Mammary epithelial cell (primary cell): ENCODE measurements at regions of chr9 and their contacts with region 1.

Region 1: DNA sequence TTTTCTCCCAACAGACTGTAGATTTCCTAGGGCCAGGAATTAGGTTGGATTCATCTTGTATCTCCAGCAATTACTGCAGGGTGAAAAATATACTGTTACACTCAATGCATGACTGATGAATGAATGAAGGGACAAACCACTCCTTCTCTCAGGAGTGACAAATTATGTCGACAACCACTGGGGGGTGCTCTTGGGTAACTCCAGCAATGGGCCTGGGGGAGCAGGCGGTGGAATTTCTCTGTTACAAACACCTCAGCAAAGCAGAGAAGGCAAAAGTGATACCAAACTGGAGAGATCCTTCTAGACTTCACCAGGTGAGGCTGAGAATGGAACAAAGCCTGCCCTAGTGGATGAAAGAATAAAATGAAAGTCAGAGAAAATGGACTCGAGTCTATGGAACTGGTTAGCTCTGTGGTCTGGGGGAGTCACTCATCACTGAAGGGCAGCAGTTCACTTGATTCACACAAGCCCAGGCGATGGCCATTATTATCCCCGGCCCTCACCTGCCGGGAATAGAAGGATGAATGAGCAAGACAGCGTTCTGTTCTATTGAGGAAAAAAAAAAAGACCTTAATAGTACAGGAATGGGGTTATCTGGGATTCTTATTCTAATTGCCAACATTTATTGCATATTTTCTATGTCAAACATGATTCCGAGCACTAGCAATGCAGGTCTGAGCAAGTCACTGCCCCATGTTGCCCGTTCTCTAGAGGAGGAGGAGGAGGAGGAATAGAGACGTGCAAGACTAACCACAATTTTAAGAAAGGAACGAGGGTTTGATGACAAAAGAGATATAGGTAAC is 341.1 kb downstream of the ASTN2 start:
- DNase-seq: peak; percentile 16
- H3K4me3 ChIP-seq: peak overlapping the region in 1 of 3 experiments; percentile 13
- H3K27ac ChIP-seq: no peak overlapping the region
- H3K4me1 ChIP-seq: peaks cover 8% of the 10 kb centered on the region
- H3K27me3 ChIP-seq: no peaks in the 10 kb centered on the region
- CTCF ChIP-seq: peak; percentile 69 to 80

Region 2: GRCh38 chr9:116737152-116737546 is 336.6 kb before region 1 on chr9:
- CTCF ChIA-PET with region 1: no interaction called
- dilution Hi-C with region 1: no loop called
- in situ Hi-C with region 1: no loop called
- intact Hi-C with region 1: loop called (anchors 2 kb)
- DNase-seq: peak; percentile 62
- H3K4me3 ChIP-seq: peak overlapping the region in 1 of 3 experiments; percentile 13
- H3K27ac ChIP-seq: no peak overlapping the region
- H3K4me1 ChIP-seq: no peaks in the 10 kb centered on the region
- H3K27me3 ChIP-seq: no peaks in the 10 kb centered on the region
- CTCF ChIP-seq: peak; percentile 93 to 99

Region 3: GRCh38 chr9:116959809-116960208 is 113.9 kb before region 1 on chr9:
- CTCF ChIA-PET with region 1: no interaction called
- dilution Hi-C with region 1: no loop called
- in situ Hi-C with region 1: no loop called
- intact Hi-C with region 1: no loop called
- DNase-seq: no peak
- H3K4me3 ChIP-seq: no peak overlapping the region
- H3K27ac ChIP-seq: no peak overlapping the region
- H3K4me1 ChIP-seq: no peaks in the 10 kb centered on the region
- H3K27me3 ChIP-seq: no peaks in the 10 kb centered on the region
- CTCF ChIP-seq: no peak

Region 4: DNA sequence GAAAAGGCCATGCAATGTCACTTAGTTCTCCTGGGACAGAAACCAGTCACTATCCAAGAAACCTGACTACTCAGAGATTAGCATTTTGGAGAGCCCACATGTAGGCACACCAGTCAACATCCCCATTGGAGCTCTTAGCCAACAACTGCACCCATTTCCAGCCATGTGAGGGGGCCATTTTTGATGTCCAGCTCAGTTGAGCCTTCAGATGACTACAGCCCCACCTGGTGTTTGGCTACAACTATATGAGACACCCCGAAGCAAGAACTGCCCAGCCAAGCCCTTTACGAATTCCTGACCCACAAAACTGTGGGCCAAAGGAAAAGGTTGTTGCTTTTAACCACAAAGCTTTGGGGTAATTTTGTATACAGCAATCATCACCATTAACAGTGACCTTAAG is 41.0 kb after region 1 on chr9:
- CTCF ChIA-PET with region 1: interaction called, 13 read pairs
- dilution Hi-C with region 1: no loop called
- in situ Hi-C with region 1: no loop called
- intact Hi-C with region 1: loop called (anchors 2 kb)
- DNase-seq: no peak
- H3K4me3 ChIP-seq: no peak overlapping the region
- H3K27ac ChIP-seq: no peak overlapping the region
- H3K4me1 ChIP-seq: peaks cover 2% of the 10 kb centered on the region
- H3K27me3 ChIP-seq: peaks cover 2% of the 10 kb centered on the region
- CTCF ChIP-seq: peak in 1 of 2 donors; percentile 25

Region 5: GRCh38 chr9:117247266-117247665 is 173.5 kb after region 1 on chr9:
- CTCF ChIA-PET with region 1: no interaction called
- dilution Hi-C with region 1: no loop called
- in situ Hi-C with region 1: no loop called
- intact Hi-C with region 1: loop called (anchors 10 kb)
- DNase-seq: peak; percentile 3
- H3K4me3 ChIP-seq: no peak overlapping the region
- H3K27ac ChIP-seq: no peak overlapping the region
- H3K4me1 ChIP-seq: no peaks in the 10 kb centered on the region
- H3K27me3 ChIP-seq: no peaks in the 10 kb centered on the region
- CTCF ChIP-seq: peak; percentile 22 to 44

Region 6: GRCh38 chr9:117411548-117411947 is 337.8 kb after region 1 on chr9:
- CTCF ChIA-PET with region 1: interaction called, 3 read pairs
- dilution Hi-C with region 1: no loop called
- in situ Hi-C with region 1: loop called in 1 of 2 experiments (anchors 25 kb)
- intact Hi-C with region 1: loop called (anchors 2 kb)
- DNase-seq: peak; percentile 19
- H3K4me3 ChIP-seq: no peak overlapping the region
- H3K27ac ChIP-seq: no peak overlapping the region
- H3K4me1 ChIP-seq: peaks cover 6% of the 10 kb centered on the region
- H3K27me3 ChIP-seq: peaks cover 21% of the 10 kb centered on the region
- CTCF ChIP-seq: peak; percentile 79 to 84

Region 7: GRCh38 chr9:117487555-117488175 is 413.9 kb after region 1 on chr9:
- CTCF ChIA-PET with region 1: no interaction called
- dilution Hi-C with region 1: no loop called
- in situ Hi-C with region 1: no loop called
- intact Hi-C with region 1: loop called (anchors 5 kb)
- DNase-seq: peak; percentile 65
- H3K4me3 ChIP-seq: no peak overlapping the region
- H3K27ac ChIP-seq: no peak overlapping the region
- H3K4me1 ChIP-seq: no peaks in the 10 kb centered on the region
- H3K27me3 ChIP-seq: no peaks in the 10 kb centered on the region
- CTCF ChIP-seq: peak; percentile 89 to 97